Mammary epithelial cell (primary cell): ENCODE measurements at regions of chr14 and their contacts with region 1.

Region 1: GRCh38 chr14:74612350-74613021 is 449 bp upstream of the LTBP2 start:
- DNase-seq: peak; percentile 68
- H3K4me3 ChIP-seq: peak overlapping the region; percentile 62 to 70 (median 64)
- H3K27ac ChIP-seq: no peak overlapping the region
- H3K4me1 ChIP-seq: peaks cover 76% of the 10 kb centered on the region
- H3K27me3 ChIP-seq: no peaks in the 10 kb centered on the region
- CTCF ChIP-seq: peak; percentile 38 to 64

Region 2: DNA sequence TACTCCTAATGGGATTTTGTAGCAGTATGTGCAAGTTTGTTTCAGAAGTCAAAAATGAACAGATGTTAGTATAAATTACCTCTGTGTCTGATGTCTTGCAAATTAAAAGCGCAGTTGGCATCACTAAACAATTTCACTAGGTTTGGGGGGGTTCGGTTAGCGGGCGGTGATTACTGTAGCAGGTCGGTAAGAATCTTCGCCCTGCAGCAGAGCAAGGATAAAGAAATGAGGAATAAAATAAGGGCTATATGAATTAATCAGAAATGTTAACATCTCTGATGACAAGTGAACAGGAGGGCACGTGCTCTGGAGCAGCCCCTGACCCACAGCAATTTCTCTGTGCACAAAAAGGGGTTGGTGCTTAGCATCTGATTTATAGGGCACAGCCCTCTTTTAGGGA is 416.9 kb before region 1 on chr14:
- CTCF ChIA-PET with region 1: no interaction called
- dilution Hi-C with region 1: no loop called
- in situ Hi-C with region 1: no loop called
- intact Hi-C with region 1: no loop called
- DNase-seq: no peak
- H3K4me3 ChIP-seq: no peak overlapping the region
- H3K27ac ChIP-seq: no peak overlapping the region
- H3K4me1 ChIP-seq: no peaks in the 10 kb centered on the region
- H3K27me3 ChIP-seq: no peaks in the 10 kb centered on the region
- CTCF ChIP-seq: no peak

Region 3: DNA sequence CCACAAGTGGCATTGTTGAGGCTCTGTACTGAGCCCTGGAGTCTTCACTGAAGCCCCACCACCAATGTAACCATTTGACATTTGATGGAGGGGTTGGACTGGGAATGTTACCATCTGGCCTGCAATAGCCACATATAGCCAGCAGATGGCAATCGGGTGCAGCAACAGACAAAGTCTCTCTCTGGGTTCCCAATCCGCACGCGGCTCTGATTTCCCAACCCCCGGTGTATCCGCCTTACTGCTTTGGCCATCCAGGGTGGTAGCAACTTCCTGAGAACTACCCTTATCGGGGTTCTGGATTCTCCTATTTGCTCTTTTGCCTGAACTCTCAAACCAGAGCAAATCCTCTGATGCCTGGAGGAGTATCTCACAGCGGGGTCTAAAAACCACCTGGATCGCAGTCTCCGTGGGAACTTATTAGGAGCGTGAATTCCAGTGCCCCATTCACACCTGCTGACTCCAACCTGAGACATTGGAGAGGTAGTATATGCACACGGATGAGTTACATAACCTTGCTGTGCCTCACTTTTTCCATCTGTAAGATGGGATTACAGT is 250.0 kb before region 1 on chr14:
- CTCF ChIA-PET with region 1: no interaction called
- dilution Hi-C with region 1: no loop called
- in situ Hi-C with region 1: no loop called
- intact Hi-C with region 1: loop called (anchors 5 kb)
- DNase-seq: peak; percentile 58
- H3K4me3 ChIP-seq: no peak overlapping the region
- H3K27ac ChIP-seq: no peak overlapping the region
- H3K4me1 ChIP-seq: no peaks in the 10 kb centered on the region
- H3K27me3 ChIP-seq: no peaks in the 10 kb centered on the region
- CTCF ChIP-seq: peak; percentile 98

Region 4: GRCh38 chr14:74516451-74517155 is 95.9 kb before region 1 on chr14:
- CTCF ChIA-PET with region 1: no interaction called
- dilution Hi-C with region 1: no loop called
- in situ Hi-C with region 1: no loop called
- intact Hi-C with region 1: no loop called
- DNase-seq: peak; percentile 61
- H3K4me3 ChIP-seq: no peak overlapping the region
- H3K27ac ChIP-seq: no peak overlapping the region
- H3K4me1 ChIP-seq: peaks cover 65% of the 10 kb centered on the region
- H3K27me3 ChIP-seq: no peaks in the 10 kb centered on the region
- CTCF ChIP-seq: peak in 1 of 2 donors; percentile 2

Region 5: GRCh38 chr14:74549588-74549987 is 62.9 kb before region 1 on chr14:
- CTCF ChIA-PET with region 1: no interaction called
- dilution Hi-C with region 1: no loop called
- in situ Hi-C with region 1: no loop called
- intact Hi-C with region 1: loop called (anchors 1 kb)
- DNase-seq: peak; percentile 36
- H3K4me3 ChIP-seq: no peak overlapping the region
- H3K27ac ChIP-seq: no peak overlapping the region
- H3K4me1 ChIP-seq: peaks cover 4% of the 10 kb centered on the region
- H3K27me3 ChIP-seq: no peaks in the 10 kb centered on the region
- CTCF ChIP-seq: peak; percentile 38 to 90

Region 6: DNA sequence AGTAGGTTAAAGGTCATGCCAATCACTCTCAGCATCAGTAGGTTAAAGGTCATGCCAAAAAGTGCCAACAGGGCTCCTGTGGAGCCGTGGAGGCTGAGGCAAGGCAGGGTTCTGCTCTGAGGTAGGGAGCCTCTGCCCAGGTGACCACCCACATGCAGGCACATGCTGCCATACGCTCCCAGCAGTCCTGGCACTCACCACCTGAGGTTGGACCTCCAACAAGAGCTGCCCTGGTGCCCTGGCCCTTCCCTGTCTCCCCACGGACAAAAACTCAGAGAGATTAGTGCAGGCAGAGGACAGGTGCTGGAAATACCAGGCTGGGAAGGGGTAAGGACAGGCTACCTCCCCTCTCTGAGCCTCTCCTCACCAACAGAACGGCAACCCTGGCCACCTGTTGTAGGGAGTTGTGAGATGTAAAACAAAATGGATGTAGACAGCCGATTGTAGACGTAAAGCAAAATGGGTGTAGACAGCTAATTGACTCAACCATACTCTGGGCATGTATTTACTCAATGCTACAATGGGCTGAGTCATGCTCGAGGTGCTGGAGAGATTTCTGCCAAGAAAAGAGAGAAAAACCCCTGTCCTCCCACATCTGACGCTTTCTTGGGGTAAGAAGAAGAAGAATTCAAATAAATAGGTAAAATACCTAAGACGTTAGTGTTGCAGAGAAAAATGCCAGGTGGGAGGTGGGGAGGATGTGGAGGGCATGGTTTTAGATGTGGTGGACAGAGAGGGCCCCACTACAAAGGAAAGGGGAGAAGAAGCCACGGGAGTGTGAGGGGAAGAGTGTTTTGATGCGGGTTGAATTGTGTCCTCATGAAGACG is 32.8 kb before region 1 on chr14:
- CTCF ChIA-PET with region 1: interaction called, 13 read pairs
- dilution Hi-C with region 1: loop called (anchors 5 kb)
- in situ Hi-C with region 1: no loop called
- intact Hi-C with region 1: no loop called
- DNase-seq: peak; percentile 95
- H3K4me3 ChIP-seq: no peak overlapping the region
- H3K27ac ChIP-seq: peak overlapping the region; percentile 88
- H3K4me1 ChIP-seq: peaks cover 74% of the 10 kb centered on the region
- H3K27me3 ChIP-seq: no peaks in the 10 kb centered on the region
- CTCF ChIP-seq: no peak

Region 7: DNA sequence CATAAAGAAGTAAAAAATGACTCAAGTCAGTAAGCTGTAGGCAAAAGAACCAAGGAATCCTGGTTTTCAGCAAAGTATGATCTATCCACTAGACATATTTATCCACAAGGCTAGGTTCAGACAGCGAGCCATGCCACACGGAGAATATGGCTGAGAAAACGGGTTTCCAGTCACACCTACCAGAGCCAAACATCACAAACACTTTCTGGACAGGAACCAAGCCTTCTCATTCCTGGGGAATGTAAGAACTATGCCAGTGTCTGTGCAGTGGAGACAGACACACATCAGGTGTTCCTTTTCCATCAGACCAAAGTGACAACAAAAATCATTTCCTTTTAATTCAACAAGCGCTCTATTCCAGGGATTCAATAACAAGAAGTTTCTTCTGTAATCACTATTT is 59.3 kb after region 1 on chr14:
- CTCF ChIA-PET with region 1: interaction called, 7 read pairs
- dilution Hi-C with region 1: no loop called
- in situ Hi-C with region 1: no loop called
- intact Hi-C with region 1: loop called (anchors 1 kb)
- DNase-seq: peak; percentile 73
- H3K4me3 ChIP-seq: no peak overlapping the region
- H3K27ac ChIP-seq: peak overlapping the region; percentile 1
- H3K4me1 ChIP-seq: peaks cover 16% of the 10 kb centered on the region
- H3K27me3 ChIP-seq: no peaks in the 10 kb centered on the region
- CTCF ChIP-seq: no peak

Region 8: GRCh38 chr14:74762917-74763802 is 150.7 kb after region 1 on chr14 and contains the start of gene YLPM1:
- CTCF ChIA-PET with region 1: interaction called, 4 read pairs
- dilution Hi-C with region 1: no loop called
- in situ Hi-C with region 1: no loop called
- intact Hi-C with region 1: loop called (anchors 1 kb)
- DNase-seq: peak; percentile 96
- H3K4me3 ChIP-seq: peak within 1 kb of the TSS; percentile 68 to 92 (median 86)
- H3K27ac ChIP-seq: peak within 1 kb of the TSS; percentile 90
- H3K4me1 ChIP-seq: peaks cover 10% of the 10 kb centered on the region
- H3K27me3 ChIP-seq: no peaks in the 10 kb centered on the region
- CTCF ChIP-seq: peak; percentile 53 to 55
- total RNA-seq, gene YLPM1: 38.7 to 52.4 TPM

Region 9: GRCh38 chr14:74804219-74804826 is 191.8 kb after region 1 on chr14:
- CTCF ChIA-PET with region 1: interaction called, 16 read pairs
- dilution Hi-C with region 1: no loop called
- in situ Hi-C with region 1: loop called in 1 of 2 experiments (anchors 25 kb)
- intact Hi-C with region 1: loop called (anchors 1 kb)
- DNase-seq: peak; percentile 33
- H3K4me3 ChIP-seq: no peak overlapping the region
- H3K27ac ChIP-seq: no peak overlapping the region
- H3K4me1 ChIP-seq: no peaks in the 10 kb centered on the region
- H3K27me3 ChIP-seq: no peaks in the 10 kb centered on the region
- CTCF ChIP-seq: peak; percentile 33 to 51